Activated B cell treated with CpG ODN at 0.5 μM for 24 hours (primary cell): ENCODE measurements at regions of chr6 and their contacts with region 1.

Region 1: DNA sequence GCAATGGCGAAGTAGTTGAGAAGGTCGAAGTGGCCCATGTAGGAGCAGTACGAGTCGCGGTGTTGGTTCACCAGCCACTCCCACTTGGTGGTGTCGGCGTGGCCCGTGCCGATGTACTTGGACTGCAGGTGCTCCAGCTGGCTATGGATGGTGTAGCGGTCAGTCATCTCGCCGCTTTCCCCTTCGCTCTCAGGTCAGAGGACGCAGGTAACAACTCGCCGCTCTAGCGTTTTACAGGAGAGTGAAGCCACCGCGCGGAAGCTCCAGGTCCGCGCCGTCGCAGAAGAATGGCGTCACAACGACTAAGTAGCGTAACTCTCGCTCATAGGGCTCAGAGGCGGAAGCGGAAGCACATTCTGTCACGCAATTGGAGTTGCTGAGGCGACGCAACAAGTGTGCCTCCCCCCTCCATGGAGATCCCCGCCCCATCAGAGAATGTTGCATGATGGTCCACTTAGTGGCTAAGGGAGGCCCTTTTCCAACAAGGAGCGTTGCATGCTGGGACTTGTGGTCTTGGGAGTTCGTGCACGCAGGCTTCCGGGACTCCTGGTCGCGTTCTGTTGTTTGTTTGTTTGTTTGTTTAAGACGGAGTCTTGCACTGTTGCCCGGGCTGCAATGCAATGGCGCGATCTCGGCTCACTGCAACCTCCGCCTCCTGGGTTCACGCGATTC is at the start of gene SF3B5:
- DNase-seq: peak; percentile 93
- ATAC-seq: peak; percentile 96
- H3K4me3 Mint-ChIP-seq: peak within 1 kb of the TSS; percentile 99
- H3K27ac Mint-ChIP-seq: peak within 1 kb of the TSS; percentile 99
- H3K4me1 Mint-ChIP-seq: peaks cover 24% of the 10 kb centered on the region
- H3K27me3 Mint-ChIP-seq: no peaks in the 10 kb centered on the region
- CTCF ChIP-seq: no peak
- total RNA-seq, gene SF3B5: 144 and 147 TPM in 2 replicates

Region 2: DNA sequence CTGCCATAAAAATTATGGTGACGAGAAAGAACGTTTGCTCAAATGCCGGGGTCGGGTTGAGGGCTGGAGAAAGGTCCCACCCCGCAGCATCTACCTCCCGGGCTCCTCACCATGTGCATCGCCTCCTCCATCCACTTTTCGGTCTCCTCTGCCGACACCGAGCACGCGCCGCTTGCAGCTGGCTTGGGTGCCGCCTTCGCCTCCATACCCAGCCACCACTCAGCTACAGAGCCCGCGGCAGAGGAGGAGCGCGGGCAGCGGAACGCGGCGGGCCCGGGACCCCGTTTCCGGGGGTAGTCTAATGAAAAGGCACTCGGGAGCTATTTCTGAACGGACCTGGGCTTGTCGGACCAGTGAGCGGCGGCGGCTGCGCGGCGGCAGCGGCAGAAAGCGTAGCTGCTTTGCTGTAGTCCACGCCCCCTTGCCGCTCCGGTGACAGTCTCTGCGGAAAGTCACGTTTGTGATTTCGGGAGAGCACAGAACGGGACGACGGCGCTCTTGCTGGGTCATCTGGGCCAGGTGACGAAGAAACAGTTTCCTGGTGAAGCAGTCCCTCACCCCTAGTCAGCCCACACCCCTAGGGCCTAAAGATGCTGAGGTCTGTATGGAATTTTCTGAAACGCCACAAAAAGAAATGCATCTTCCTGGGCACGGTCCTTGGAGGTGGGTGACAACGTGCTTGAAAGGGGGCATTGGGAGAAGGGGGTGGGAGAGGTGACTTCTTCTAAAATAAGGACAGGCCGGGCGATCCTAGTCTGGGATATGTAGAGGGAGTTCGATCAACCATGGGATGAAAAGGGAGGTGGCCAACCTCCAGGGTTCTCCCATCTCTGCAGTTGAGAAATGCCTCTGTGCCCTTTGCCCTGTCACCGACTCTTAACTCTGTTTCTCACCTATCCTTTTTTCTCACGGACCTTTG is 644.8 kb before region 1 on chr6 and contains the starts of genes ADAT2 and PEX3:
- CTCF ChIA-PET with region 1: no interaction called
- POLR2A ChIA-PET with region 1: no interaction called
- intact Hi-C with region 1: loop called (anchors 1 kb)
- DNase-seq: peak; percentile 90
- ATAC-seq: peak; percentile 91
- H3K4me3 Mint-ChIP-seq: peak within 1 kb of the TSS; percentile 98
- H3K27ac Mint-ChIP-seq: peak within 1 kb of the TSS; percentile 96
- H3K4me1 Mint-ChIP-seq: peaks cover 39% of the 10 kb centered on the region
- H3K27me3 Mint-ChIP-seq: no peaks in the 10 kb centered on the region
- CTCF ChIP-seq: no peak
- total RNA-seq, gene ADAT2: 22.4 and 30.2 TPM in 2 replicates
- total RNA-seq, gene PEX3: 21.7 and 26.5 TPM in 2 replicates

Region 3: DNA sequence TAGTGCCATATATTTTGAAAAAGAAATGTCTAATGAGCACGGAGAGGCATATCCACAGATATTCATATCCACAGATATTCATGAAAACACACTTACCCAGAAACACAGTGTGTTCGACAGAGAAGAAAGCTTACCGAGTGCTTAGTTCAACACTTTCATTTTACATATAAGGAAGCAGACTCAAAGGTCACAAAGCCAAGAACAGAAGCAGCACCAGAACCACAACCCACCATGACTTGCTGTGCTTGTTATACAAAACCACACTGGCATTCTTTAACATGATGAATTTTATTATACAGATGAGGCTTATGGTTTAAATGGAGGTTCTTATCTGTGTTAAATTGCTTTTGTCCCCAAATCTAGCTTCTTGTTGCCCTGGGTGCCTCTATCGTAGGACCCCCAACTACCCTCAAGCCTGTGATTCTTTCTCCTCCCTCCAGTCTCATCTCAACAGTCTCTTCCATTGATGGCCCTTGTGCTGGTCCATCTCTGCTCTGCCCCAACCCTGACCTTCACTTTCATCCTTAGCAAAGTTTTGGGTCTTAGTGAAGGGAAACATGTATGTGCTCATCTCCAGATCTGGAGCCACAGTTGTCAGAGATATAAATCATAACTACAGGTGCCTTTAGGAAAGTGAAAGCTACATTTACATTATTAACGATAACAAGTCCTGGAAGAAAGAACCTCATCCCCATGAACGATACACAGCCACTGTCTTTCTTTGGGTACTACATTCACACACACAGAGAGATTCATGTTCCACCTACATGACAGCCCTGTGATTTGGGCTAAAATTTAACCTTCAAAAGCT is 40.1 kb before region 1 on chr6:
- CTCF ChIA-PET with region 1: no interaction called
- POLR2A ChIA-PET with region 1: interaction called, 6 read pairs
- intact Hi-C with region 1: loop called (anchors 2 kb)
- DNase-seq: no peak
- ATAC-seq: peak; percentile 92
- H3K4me3 Mint-ChIP-seq: peak overlapping the region; percentile 82
- H3K27ac Mint-ChIP-seq: peak overlapping the region; percentile 93
- H3K4me1 Mint-ChIP-seq: peaks cover 30% of the 10 kb centered on the region
- H3K27me3 Mint-ChIP-seq: no peaks in the 10 kb centered on the region
- CTCF ChIP-seq: no peak

Region 4: DNA sequence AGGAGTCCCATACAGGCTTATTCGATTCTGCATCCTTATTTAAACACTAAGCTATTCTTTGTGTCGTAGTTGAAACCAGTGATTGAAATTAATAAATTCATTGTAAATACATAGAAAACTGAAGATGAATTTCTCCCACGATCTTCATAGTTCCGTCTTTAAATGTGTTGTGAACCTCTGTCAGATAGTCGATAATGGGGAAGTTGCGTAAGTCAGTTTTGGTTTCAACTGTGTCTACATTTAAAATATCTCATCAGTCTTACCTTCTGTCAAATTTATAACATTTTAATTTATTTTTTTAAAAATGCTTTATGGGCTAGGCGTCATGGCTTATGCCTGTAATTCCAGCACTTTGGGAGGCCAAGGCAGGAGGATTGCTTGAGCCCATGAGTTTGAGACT is 67.5 kb after region 1 on chr6:
- CTCF ChIA-PET with region 1: no interaction called
- POLR2A ChIA-PET with region 1: no interaction called
- intact Hi-C with region 1: no loop called
- DNase-seq: no peak
- ATAC-seq: peak; percentile 64
- H3K4me3 Mint-ChIP-seq: peak overlapping the region; percentile 15
- H3K27ac Mint-ChIP-seq: peak overlapping the region; percentile 57
- H3K4me1 Mint-ChIP-seq: peaks cover 23% of the 10 kb centered on the region
- H3K27me3 Mint-ChIP-seq: no peaks in the 10 kb centered on the region
- CTCF ChIP-seq: no peak

Region 5: GRCh38 chr6:144334131-144334708 is 238.8 kb after region 1 on chr6:
- CTCF ChIA-PET with region 1: no interaction called
- POLR2A ChIA-PET with region 1: interaction called, 5 read pairs
- intact Hi-C with region 1: loop called (anchors 1 kb)
- DNase-seq: peak; percentile 52
- ATAC-seq: peak; percentile 76
- H3K4me3 Mint-ChIP-seq: peak overlapping the region; percentile 78
- H3K27ac Mint-ChIP-seq: peak overlapping the region; percentile 88
- H3K4me1 Mint-ChIP-seq: peaks cover 71% of the 10 kb centered on the region
- H3K27me3 Mint-ChIP-seq: no peaks in the 10 kb centered on the region
- CTCF ChIP-seq: no peak

Region 6: DNA sequence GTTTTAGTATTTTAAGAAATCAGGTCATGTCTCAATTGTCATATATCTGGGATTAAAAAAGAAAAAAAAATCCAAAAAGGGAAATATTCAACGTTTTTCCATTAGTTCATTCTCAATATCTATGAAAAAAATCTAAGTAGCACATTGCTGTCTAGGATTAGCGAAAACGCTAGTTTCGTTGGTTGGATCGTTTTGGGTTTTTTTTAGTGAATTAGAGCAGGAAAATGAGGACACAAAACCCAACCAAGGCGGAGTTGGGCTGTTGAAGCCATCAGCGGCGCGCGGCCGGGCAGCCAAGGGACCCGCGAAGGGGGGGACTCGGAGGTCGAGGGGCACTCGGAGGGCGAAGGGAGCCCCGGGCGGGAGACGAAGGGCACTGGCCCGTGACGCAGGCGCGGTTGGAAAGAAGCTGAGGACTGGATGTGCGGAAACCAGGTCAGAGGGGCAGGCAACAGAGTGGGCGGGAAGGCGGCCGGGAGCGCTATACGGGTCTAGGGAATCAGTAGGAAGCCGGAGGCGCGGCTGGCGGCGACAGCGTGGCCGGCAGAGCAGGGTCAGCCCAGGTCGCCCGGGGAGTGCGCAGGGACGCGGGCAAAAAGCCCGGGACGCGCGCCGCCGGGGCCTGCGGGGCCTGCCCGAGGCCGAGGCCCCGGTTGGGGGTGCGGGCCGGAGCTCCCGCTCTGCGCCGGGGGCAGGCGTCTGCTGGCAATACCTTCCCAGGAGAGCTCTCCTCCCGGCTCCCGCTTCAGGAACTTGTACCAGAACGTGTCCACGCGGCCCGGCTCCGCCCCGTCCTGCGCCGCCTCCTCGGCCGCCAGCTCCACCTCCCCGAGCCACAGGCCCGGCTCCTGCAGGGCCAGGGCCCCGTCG is 1639.3 kb after region 1 on chr6:
- CTCF ChIA-PET with region 1: no interaction called
- POLR2A ChIA-PET with region 1: no interaction called
- intact Hi-C with region 1: loop called (anchors 10 kb)
- DNase-seq: peak; percentile 77
- ATAC-seq: peak; percentile 72
- H3K4me3 Mint-ChIP-seq: peak overlapping the region; percentile 94
- H3K27ac Mint-ChIP-seq: peak overlapping the region; percentile 94
- H3K4me1 Mint-ChIP-seq: peaks cover 34% of the 10 kb centered on the region
- H3K27me3 Mint-ChIP-seq: no peaks in the 10 kb centered on the region
- CTCF ChIP-seq: no peak